KBM-7 (cell line): ENCODE measurements at regions of chr11 and their contacts with region 1.

Region 1: GRCh38 chr11:34890812-34891211 is 25.4 kb downstream of the APIP start:
- DNase-seq: peak; percentile 49

Region 2: GRCh38 chr11:34791780-34792542 is 98.9 kb before region 1 on chr11:
- in situ Hi-C with region 1: loop called (anchors 25 kb)
- DNase-seq: peak; percentile 54